ENCODE measurements at regions of chr13 and their contacts with region 1.

Region 1: DNA sequence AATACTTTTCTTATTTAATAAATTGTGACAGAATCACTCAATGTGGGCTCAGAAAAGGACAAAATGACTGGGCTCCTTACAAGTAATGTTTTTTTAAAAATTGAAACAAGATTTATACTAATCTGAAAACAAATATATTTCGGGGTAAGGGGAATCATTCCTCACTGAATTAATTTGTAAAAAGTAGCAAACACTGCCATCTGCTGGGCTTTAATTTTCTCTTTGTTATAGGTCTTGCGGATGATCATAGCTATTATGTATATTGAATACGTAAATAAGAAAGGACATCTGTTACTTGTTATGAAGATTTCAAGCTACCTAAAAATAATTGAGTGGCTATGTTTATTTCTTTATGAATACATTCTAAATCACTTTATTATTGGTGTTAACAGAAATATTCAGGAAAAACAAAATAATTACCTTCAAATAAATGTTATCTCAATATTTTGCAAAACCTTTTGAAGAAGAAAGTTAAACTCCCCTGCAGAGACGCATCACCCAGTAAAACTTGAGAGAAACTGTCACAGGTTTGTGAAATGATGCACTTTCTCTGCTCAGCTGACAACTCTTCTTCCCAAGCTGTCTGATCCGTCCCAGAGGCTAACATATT is 17.8 kb upstream of the ENOX1 start:
- DNase-seq: no peak
- H3K4me3 ChIP-seq: peak overlapping the region; percentile 32
- CTCF ChIP-seq: peak; percentile 18

Region 2: DNA sequence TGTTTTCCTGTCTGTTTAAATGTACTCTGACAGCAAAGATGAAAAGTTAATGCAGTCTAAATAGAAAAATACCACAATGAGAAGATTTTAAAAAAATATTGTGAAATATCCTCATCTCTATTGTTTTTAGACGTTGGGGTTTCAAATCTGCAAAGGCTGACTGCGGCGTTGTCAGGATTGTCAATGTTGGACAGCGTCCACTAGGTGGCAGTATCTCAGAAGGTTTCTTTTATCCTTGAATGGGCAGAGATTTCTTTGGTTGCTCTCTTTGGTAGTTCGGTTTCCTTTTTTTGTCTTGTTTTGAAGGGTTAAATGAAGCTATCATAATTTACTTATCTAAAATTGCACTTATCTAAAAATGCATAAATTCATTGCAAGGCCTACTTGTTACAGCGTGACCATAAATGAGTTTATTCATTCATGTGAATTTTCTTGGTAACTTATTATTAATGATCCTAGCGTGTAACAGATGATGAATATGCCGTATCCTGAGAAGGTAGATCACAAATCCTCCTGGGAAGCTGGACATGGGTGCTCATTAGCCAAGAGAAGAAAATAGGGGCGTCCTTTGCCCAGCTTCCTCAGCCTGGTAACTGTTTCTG is 1209.5 kb before region 1 on chr13:
- CTCF ChIA-PET with region 1: interaction called, 13 read pairs
- POLR2A ChIA-PET with region 1: no interaction called
- DNase-seq: no peak
- H3K4me3 ChIP-seq: no peak overlapping the region
- CTCF ChIP-seq: peak; percentile 60

Region 3: DNA sequence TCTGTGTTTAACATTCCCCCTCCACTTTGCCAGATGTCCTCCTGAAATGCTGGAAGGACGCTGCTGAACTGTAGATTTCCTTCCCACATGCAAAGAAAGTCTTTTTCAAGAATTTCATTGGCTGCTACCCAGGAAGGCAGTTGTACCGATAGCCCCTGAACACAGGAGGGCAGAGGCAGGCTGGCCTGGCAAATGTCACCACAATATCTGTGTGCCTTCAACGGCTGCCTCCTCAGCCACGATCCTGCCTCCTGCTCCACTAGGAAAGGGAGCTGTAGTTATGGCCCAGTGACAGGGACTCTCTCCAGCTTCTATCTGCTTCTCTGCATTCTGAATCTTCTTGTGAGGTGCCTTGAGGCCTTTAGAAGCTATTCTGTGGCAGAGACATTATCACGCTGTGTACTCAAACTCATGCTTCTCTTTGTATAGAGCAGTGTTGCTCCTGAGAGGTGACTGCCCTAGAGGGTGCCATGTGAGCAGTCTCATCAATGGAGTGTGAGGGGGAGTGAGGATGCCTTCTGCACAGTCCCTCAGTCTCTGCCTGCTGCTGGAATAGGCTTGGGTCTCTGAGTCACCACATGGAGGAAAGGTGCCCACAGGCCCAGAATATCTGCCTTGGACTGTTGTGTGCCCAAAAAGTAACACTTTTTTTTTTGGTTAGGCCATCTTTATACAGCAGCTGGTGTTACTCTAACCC is 501.4 kb before region 1 on chr13:
- CTCF ChIA-PET with region 1: interaction called, 13 read pairs
- POLR2A ChIA-PET with region 1: no interaction called
- DNase-seq: no peak
- H3K4me3 ChIP-seq: no peak overlapping the region
- CTCF ChIP-seq: peak; percentile 72

Region 4: GRCh38 chr13:43792076-43792881 is 12.3 kb before region 1 on chr13:
- CTCF ChIA-PET with region 1: interaction called, 23 read pairs
- POLR2A ChIA-PET with region 1: no interaction called
- DNase-seq: no peak
- H3K4me3 ChIP-seq: no peak overlapping the region
- CTCF ChIP-seq: no peak

Region 5: DNA sequence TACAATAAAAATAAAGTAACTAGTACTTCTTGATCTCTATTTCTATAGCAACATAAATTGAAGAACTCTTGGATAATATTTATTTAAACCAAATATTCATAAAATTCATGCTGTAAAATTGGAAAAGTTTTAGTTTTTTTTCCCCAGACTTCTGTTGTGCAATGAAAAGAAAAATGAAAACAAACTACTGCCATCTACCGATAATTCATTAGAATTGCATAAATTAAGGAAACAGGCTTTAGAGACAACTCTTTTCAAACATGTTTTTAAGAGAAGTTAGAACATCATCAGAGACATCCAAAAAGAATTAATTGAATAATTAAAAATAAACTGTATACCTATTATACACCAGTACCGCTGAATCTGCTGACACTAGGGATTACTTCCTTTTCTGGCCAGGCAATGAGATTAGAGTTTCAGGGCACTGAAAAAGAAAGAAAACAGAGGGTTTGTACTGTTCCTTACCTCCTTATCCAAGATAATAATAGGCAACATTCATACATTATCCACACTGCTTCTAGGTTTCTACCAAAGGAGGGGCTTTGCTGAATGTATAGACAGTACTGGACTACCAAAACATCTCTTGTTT is 70.0 kb after region 1 on chr13:
- CTCF ChIA-PET with region 1: interaction called, 14 read pairs
- POLR2A ChIA-PET with region 1: interaction called, 3 read pairs
- DNase-seq: no peak
- H3K4me3 ChIP-seq: no peak overlapping the region
- CTCF ChIP-seq: peak; percentile 16

Measured in AG04449 (cell line).